ENCODE measurements at regions of chr16 and their contacts with region 1.

Region 1: GRCh38 chr16:50152807-50153452 is at the start of gene TENT4B:
- DNase-seq: peak; percentile 88
- H3K4me3 ChIP-seq: peak within 1 kb of the TSS; percentile 83
- H3K27ac ChIP-seq: peak within 1 kb of the TSS; percentile 98
- H3K4me1 ChIP-seq: peaks cover 46% of the 10 kb centered on the region
- H3K27me3 ChIP-seq: no peaks in the 10 kb centered on the region
- CTCF ChIP-seq: no peak
- total RNA-seq, gene TENT4B: 7.5 TPM

Region 2: GRCh38 chr16:50202926-50203624 is 50.1 kb after region 1 on chr16:
- intact Hi-C with region 1: loop called (anchors 10 kb)
- DNase-seq: no peak
- H3K4me3 ChIP-seq: peak overlapping the region; percentile 6
- H3K27ac ChIP-seq: peak overlapping the region; percentile 62
- H3K4me1 ChIP-seq: peaks cover 73% of the 10 kb centered on the region
- H3K27me3 ChIP-seq: no peaks in the 10 kb centered on the region
- CTCF ChIP-seq: no peak

Measured in left ventricle myocardium inferior (tissue), 1 donor.